H1 (cell line): ENCODE measurements at regions of chr1 and their contacts with region 1.

Region 1: DNA sequence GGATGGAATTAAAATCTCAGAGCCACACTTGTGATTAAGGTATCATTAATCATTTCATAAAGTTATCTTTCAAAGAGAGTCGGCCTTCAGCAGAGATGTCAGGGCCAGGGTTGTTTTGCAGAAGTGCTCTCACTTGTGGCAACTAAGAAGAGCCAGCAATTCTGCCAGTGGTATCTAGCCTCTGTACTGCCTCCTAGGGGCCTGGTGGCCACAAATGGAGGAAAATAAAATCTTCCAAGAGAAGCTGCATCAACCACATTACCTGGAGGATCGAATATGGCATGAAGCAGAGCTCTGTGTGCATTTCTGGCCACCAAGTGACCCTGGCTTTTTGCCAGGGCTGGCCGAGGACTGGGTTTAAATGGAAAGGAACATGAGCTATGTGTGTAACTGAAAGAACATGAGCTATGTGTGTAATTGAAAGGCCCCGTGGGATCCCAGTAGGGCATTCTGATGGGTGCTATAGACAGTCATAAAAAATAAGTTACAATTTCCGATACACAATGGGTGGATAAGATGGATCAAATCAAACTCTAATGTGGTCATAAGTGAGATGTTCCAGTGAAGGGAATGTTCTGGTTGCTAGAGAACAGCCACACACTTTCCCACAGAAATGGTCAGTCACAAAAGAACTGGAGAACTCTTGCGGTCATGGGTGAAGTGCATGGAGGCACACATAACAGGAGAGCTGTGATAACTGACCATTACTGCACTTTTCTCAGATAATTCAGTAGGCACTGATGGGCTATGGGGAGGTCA is 335.8 kb downstream of the CAMTA1 start:
- DNase-seq: no peak
- H3K4me3 ChIP-seq: no peak overlapping the region
- H3K27ac ChIP-seq: no peak overlapping the region
- H3K4me1 ChIP-seq: peaks cover 0 to 4% (median 3%) of the 10 kb centered on the region in 4 experiments; a peak in 5 of 7 replicates
- H3K27me3 ChIP-seq: no peaks in the 10 kb centered on the region
- CTCF ChIP-seq: peak in 2 of 3 experiments; percentile 58 to 63; a peak in 3 of 4 replicates
- EP300 ChIP-seq: no peak
- POLR2A ChIP-seq: no peak
- RAD21 ChIP-seq: peak; percentile 34 to 57

Region 2: GRCh38 chr1:6962996-6963911 is 157.8 kb before region 1 on chr1:
- CTCF ChIA-PET with region 1: no interaction called
- POLR2A ChIA-PET with region 1: no interaction called
- DNase-seq: peak; percentile 96 to 99
- H3K4me3 ChIP-seq: peak overlapping the region; percentile 39 to 65 (median 49)
- H3K27ac ChIP-seq: no peak overlapping the region
- H3K4me1 ChIP-seq: peaks cover 0 to 24% (median 11%) of the 10 kb centered on the region in 4 experiments; a peak in 6 of 7 replicates
- H3K27me3 ChIP-seq: no peaks in the 10 kb centered on the region; a peak in 1 of 7 replicates
- CTCF ChIP-seq: peak in 2 of 3 experiments; percentile 22 to 23; a peak in 3 of 4 replicates
- EP300 ChIP-seq: no peak
- POLR2A ChIP-seq: no peak
- RAD21 ChIP-seq: peak; percentile 11 to 20; a peak in 2 of 4 replicates

Region 3: DNA sequence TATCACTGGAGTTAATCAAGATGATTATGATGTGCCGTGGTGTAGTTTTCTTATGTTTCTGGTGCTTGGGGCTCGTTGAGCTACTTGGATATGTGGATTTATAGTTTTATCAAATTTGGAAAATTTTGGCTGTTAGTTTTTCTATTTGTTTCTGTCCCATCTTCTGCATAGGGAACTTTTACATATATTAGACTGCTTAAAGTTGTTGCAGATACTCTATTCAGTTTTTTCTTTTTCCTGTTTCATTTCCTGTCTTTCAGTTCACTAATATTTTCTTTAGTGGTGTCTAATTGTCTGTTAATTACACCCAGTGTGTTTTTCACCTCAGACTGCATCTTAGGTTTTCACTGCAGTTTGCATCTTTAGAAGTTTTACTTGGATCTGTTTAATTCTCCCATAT is 88.0 kb before region 1 on chr1:
- CTCF ChIA-PET with region 1: no interaction called
- POLR2A ChIA-PET with region 1: no interaction called
- DNase-seq: no peak
- H3K4me3 ChIP-seq: no peak overlapping the region
- H3K27ac ChIP-seq: no peak overlapping the region
- H3K4me1 ChIP-seq: no peaks in the 10 kb centered on the region
- H3K27me3 ChIP-seq: no peaks in the 10 kb centered on the region
- CTCF ChIP-seq: no peak
- EP300 ChIP-seq: no peak
- POLR2A ChIP-seq: no peak
- RAD21 ChIP-seq: no peak

Region 4: DNA sequence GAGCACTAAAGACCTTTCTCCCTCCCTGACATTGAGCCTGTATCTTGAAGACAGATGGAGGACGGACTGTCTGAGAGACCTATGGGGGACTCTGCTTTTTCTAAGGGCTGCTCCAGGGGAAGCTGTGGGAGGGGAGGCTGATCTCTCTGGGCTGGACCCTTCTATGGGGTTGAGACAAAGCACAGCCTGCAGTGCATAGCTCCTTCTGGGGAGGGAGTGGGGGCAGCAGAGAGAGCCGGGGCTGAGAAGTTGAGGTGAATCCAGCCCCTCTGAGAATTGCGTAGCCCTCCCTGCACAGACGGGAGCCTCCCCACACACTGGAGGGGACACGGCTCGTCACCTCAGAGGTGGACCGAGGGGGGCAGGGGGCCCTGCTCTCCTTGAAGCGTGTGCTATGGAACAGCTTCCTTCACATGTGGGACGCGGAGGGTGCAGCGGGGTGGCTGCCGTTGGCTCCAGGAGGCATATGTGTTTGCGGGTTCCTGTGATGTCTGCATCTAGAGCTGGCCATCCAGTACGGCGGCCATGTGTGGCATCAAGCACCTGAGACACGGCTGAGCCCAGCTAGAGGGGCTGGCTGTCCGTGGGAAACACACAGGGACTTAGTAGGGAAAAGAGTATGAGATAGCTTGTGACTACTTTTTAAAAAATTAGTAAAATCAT is 36.7 kb before region 1 on chr1:
- CTCF ChIA-PET with region 1: interaction called, 10 read pairs
- POLR2A ChIA-PET with region 1: no interaction called
- DNase-seq: no peak
- H3K4me3 ChIP-seq: no peak overlapping the region
- H3K27ac ChIP-seq: no peak overlapping the region
- H3K4me1 ChIP-seq: peaks cover 0 to 4% (median 0%) of the 10 kb centered on the region in 4 experiments; a peak in 2 of 7 replicates
- H3K27me3 ChIP-seq: no peaks in the 10 kb centered on the region
- CTCF ChIP-seq: peak; percentile 28 to 49 (median 42); a peak in 3 of 4 replicates
- EP300 ChIP-seq: no peak
- POLR2A ChIP-seq: no peak
- RAD21 ChIP-seq: no peak; a peak in 2 of 4 replicates

Region 5: GRCh38 chr1:7110321-7110720 is 10.7 kb before region 1 on chr1:
- CTCF ChIA-PET with region 1: interaction called, 26 read pairs
- POLR2A ChIA-PET with region 1: no interaction called
- DNase-seq: no peak
- H3K4me3 ChIP-seq: no peak overlapping the region
- H3K27ac ChIP-seq: no peak overlapping the region
- H3K4me1 ChIP-seq: peaks cover 0 to 4% (median 0%) of the 10 kb centered on the region in 4 experiments; a peak in 1 of 7 replicates
- H3K27me3 ChIP-seq: no peaks in the 10 kb centered on the region
- CTCF ChIP-seq: no peak
- EP300 ChIP-seq: no peak
- POLR2A ChIP-seq: no peak
- RAD21 ChIP-seq: no peak